Panc1 (cell line): ENCODE measurements at regions of chr5 and their contacts with region 1.

Region 1: DNA sequence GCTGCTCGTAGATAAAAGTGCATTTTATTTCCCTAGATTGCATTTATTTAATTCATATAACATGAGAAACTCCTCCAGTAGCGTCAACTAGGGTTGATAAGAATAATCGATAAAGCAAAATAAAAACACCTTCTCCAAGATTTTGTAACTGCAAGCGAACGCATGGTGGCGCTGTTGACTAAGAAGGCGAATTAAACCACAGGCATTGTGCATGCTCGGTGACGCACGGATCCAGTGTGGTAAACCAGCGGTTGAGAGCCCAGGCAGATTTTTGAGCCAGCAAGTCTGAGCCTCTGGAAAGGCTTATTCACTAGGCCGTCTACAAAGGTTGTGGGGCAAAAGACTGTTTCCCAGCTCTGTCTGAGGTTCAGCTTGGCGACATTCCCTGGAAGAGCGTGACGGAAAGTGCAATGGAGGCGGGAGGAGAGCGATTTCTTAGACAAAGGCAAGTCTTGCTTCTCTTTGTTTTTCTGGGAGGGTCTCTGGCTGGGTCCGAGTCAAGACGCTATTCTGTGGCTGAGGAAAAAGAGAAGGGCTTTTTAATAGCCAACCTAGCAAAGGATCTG is at the start of gene PCDHB3:
- DNase-seq: no peak
- ATAC-seq: peak; percentile 83
- H3K4me3 ChIP-seq: peak within 1 kb of the TSS; percentile 9 to 13; a peak in 2 of 4 replicates
- H3K27ac ChIP-seq: no peak within 1 kb of the TSS
- H3K4me1 ChIP-seq: 0 out of 2 replicates have a peak, but pooled peaks cover 1% of the 10 kb centered on the region
- H3K27me3 ChIP-seq: no peaks in the 10 kb centered on the region
- CTCF ChIP-seq: peak; percentile 79
- total RNA-seq, gene PCDHB3: 0.92 TPM

Region 2: GRCh38 chr5:141155540-141156374 is 55.4 kb after region 1 on chr5:
- CTCF ChIA-PET with region 1: interaction called, 10 read pairs
- POLR2A ChIA-PET with region 1: no interaction called
- in situ Hi-C with region 1: no loop called
- intact Hi-C with region 1: loop called (anchors 2 kb)
- DNase-seq: no peak
- ATAC-seq: peak; percentile 92
- H3K4me3 ChIP-seq: peak overlapping the region; percentile 47 to 49
- H3K27ac ChIP-seq: peak overlapping the region; percentile 59
- H3K4me1 ChIP-seq: peaks cover 10% of the 10 kb centered on the region; the same call in 1 of the 2 replicates
- H3K27me3 ChIP-seq: no peaks in the 10 kb centered on the region
- CTCF ChIP-seq: peak; percentile 84